Activated CD8-positive, alpha-beta T cell treated with anti-CD3 and anti-CD28 coated beads for 36 hours (primary cell): ENCODE measurements at regions of chr14 and their contacts with region 1.

Region 1: DNA sequence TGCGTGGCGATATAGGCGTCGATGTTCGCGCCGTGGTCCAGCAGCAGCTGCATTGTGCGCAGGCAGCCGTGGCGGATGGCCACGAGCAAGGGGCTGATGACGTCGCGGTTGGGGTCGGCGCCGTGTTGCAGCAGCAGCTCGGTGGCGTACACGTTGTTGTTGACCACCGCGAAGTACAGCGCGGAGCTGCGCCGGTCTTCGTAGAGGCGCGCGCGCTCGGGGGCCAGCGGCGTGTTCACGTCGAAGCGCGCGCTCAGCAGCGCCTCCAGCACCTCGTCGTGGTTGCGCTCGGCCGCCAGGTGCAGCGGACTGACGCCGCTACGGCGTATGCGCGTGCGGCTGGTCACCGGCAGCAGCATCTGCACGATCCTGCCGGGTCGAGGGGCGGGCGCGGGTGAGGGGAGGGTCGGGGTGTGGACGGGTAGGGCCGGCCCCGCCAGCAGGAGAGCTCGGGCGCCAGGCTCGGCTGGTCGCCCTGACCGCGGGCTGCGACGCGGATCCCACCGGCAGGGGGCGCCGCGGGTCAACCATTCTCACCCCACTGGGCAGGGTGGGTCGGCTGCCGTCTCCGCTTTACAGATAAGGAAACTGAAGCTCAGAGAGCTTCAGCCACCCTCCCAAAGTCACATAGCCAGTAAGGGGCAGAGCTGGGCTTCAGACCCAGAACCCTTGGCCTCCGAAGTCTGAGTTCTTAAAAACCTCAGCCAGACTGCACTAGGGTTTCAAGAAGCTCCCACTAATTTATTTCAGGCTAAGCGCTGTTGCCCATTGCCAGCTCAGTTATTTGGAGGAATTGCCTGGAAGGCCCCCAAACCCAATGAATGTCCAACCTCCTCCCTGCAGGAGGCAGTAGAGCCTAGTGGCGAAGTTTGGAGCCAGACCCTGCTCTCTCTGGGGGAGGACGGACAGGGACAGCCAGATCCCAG is 12.4 kb downstream of the FAM181A start:
- DNase-seq: peak; percentile 93
- ATAC-seq: peak; percentile 95
- H3K4me3 Mint-ChIP-seq: peak overlapping the region; percentile 49
- H3K27ac Mint-ChIP-seq: peak overlapping the region; percentile 34
- H3K4me1 Mint-ChIP-seq: peaks cover 12% of the 10 kb centered on the region
- H3K27me3 Mint-ChIP-seq: peaks cover 20% of the 10 kb centered on the region
- CTCF ChIP-seq: peak; percentile 99

Region 2: DNA sequence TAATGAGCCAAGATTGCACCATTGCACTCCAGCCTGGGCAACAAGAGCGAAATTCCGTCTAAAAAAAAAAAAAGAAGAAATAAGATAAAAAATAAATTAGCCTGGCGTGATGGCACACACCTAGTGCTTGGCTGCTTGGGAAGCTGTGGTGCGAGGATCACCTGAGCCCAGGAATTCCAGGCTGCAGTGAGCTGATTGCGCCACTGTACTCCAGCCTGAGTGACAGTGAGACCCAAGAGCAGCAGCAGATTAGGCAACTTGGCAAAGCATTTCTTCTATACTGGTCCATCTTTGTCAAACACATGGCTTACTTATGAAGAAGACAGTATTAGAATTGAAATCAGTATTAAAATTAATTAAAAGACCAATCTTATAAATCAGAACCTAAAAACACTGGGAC is 739.0 kb before region 1 on chr14:
- CTCF ChIA-PET with region 1: no interaction called
- POLR2A ChIA-PET with region 1: no interaction called
- intact Hi-C with region 1: no loop called
- DNase-seq: no peak
- ATAC-seq: no peak
- H3K4me3 Mint-ChIP-seq: no peak overlapping the region
- H3K27ac Mint-ChIP-seq: no peak overlapping the region
- H3K4me1 Mint-ChIP-seq: peaks cover 16% of the 10 kb centered on the region
- H3K27me3 Mint-ChIP-seq: no peaks in the 10 kb centered on the region
- CTCF ChIP-seq: no peak

Region 3: DNA sequence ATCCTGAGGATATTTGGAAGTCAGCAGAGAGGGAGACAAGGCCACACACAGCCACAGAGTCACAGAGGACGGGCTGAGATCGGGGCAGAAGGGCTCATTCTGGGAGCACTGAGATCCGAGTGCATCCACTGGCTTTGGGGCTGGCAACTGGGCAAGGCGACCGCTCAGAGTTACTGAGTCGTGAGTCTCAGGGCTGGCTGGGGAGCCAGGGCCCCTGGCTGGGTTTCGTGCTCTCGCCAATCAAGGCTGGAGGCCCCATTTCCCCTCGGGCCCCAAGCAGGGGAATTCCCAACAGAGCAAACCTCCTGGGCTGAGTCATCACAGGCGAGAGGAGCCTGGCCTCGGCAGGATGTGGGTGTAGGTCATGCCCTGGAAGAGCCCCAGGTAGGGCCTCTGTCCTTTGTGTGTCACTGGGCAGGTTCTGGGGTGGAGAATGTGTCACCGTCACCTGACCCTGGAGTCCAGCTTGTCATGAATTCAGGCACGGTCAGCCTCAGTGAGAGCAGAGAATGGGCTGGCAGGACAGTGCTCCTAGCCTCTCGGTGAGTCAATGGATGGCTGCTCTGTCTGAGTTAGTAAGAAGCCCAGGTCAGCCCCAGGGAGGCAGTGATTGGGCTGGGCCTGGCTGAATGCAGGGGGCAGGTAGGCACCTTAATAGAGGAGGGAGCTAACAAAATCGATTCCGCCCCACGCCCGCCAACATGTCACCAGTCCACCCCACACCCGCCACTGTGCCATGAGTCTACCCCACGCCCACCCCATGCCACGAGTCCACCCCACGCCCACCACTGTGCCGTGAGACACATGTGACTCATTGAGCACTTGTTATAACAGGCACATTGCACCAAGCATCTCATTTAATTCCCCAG is 19.9 kb after region 1 on chr14:
- CTCF ChIA-PET with region 1: interaction called, 170 read pairs
- POLR2A ChIA-PET with region 1: interaction called, 8 read pairs
- intact Hi-C with region 1: no loop called
- DNase-seq: peak; percentile 98
- ATAC-seq: peak; percentile 69
- H3K4me3 Mint-ChIP-seq: peak overlapping the region; percentile 66
- H3K27ac Mint-ChIP-seq: peak overlapping the region; percentile 99
- H3K4me1 Mint-ChIP-seq: peaks cover 93% of the 10 kb centered on the region
- H3K27me3 Mint-ChIP-seq: no peaks in the 10 kb centered on the region
- CTCF ChIP-seq: no peak

Region 4: DNA sequence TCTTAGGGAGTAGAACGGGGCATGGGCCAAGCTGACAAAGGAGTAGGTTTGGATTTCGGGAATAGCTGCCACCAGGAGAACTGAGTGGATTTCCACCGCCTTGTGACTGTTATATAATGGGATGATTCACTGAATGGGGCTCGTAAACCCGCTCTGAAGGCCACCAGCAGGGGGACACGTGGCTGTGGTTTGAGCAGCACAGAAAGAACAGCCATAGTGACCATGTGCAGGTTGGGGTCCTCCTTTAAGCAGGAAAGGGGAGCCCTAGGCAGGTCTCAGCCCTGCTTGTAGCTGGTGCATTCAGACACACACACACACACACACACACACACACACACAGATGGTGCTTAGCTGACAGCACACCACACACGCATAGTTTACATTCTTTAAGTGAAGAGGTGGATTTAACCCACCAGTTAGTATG is 45.4 kb after region 1 on chr14:
- CTCF ChIA-PET with region 1: interaction called, 437 read pairs
- POLR2A ChIA-PET with region 1: no interaction called
- intact Hi-C with region 1: no loop called
- DNase-seq: no peak
- ATAC-seq: no peak
- H3K4me3 Mint-ChIP-seq: no peak overlapping the region
- H3K27ac Mint-ChIP-seq: no peak overlapping the region
- H3K4me1 Mint-ChIP-seq: peaks cover 15% of the 10 kb centered on the region
- H3K27me3 Mint-ChIP-seq: peaks cover 2% of the 10 kb centered on the region
- CTCF ChIP-seq: no peak

Region 5: GRCh38 chr14:94021001-94021400 is 81.4 kb after region 1 on chr14:
- CTCF ChIA-PET with region 1: interaction called, 31 read pairs
- POLR2A ChIA-PET with region 1: interaction called, 4 read pairs
- intact Hi-C with region 1: no loop called
- DNase-seq: no peak
- ATAC-seq: no peak
- H3K4me3 Mint-ChIP-seq: no peak overlapping the region
- H3K27ac Mint-ChIP-seq: no peak overlapping the region
- H3K4me1 Mint-ChIP-seq: peaks cover 32% of the 10 kb centered on the region
- H3K27me3 Mint-ChIP-seq: peaks cover 3% of the 10 kb centered on the region
- CTCF ChIP-seq: no peak

Region 6: GRCh38 chr14:94051115-94051514 is 111.5 kb after region 1 on chr14:
- CTCF ChIA-PET with region 1: interaction called, 10 read pairs
- POLR2A ChIA-PET with region 1: no interaction called
- intact Hi-C with region 1: no loop called
- DNase-seq: no peak
- ATAC-seq: no peak
- H3K4me3 Mint-ChIP-seq: no peak overlapping the region
- H3K27ac Mint-ChIP-seq: no peak overlapping the region
- H3K4me1 Mint-ChIP-seq: peaks cover 13% of the 10 kb centered on the region
- H3K27me3 Mint-ChIP-seq: no peaks in the 10 kb centered on the region
- CTCF ChIP-seq: no peak

Region 7: GRCh38 chr14:94136575-94137331 is 197.2 kb after region 1 on chr14:
- CTCF ChIA-PET with region 1: interaction called, 19 read pairs
- POLR2A ChIA-PET with region 1: no interaction called
- intact Hi-C with region 1: no loop called
- DNase-seq: peak; percentile 93
- ATAC-seq: peak; percentile 96
- H3K4me3 Mint-ChIP-seq: no peak overlapping the region
- H3K27ac Mint-ChIP-seq: no peak overlapping the region
- H3K4me1 Mint-ChIP-seq: peaks cover 2% of the 10 kb centered on the region
- H3K27me3 Mint-ChIP-seq: peaks cover 15% of the 10 kb centered on the region
- CTCF ChIP-seq: peak; percentile 95